Activated CD4-positive, alpha-beta T cell treated with anti-CD3 and anti-CD28 coated beads for 36 hours (primary cell): ENCODE measurements at regions of chr1 and their contacts with region 1.

Region 1: DNA sequence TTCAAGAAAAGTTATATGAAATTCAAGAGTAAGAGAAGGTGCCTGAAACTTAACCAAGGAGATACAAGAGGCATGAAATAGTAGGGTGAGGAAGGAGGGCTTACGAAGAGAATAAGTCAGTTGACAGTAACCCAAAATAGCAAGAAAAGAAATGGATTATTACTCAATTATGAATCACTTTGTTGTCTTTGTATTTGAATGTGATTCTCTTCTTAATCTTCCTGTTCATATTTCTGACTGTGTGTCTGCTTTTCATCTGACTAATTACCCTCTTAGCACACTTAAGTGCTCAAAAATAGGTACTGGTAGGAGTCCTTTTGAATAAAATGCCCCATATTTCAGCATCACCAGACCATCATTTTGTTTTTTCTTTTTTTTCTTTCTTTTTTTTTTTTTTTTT is 39.4 kb downstream of the GLMN start:
- DNase-seq: no peak
- ATAC-seq: no peak
- H3K4me3 Mint-ChIP-seq: no peak overlapping the region
- H3K27ac Mint-ChIP-seq: no peak overlapping the region
- H3K4me1 Mint-ChIP-seq: peaks cover 3% of the 10 kb centered on the region
- H3K27me3 Mint-ChIP-seq: no peaks in the 10 kb centered on the region

Region 2: DNA sequence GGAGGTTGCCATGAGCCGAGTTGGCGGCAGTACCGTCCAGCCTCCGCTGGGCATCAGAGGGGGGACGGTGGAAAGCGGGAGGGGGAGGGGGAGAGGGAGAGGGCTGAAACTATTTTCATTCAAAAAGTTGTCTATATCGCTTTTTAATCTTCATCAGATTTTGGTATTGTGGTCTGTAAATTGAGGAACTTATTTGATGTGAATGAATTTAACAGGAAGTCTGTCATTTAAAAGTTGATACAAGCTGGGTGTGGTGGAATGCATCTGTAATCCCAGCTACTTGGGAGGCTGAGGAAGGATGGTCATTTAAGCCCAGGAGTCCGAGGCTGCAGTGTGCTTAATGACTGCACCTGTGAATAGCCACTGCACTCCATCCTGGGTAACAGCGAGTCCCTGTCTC is 232.5 kb before region 1 on chr1:
- CTCF ChIA-PET with region 1: no interaction called
- POLR2A ChIA-PET with region 1: interaction called, 11 read pairs
- intact Hi-C with region 1: no loop called
- DNase-seq: no peak
- ATAC-seq: no peak
- H3K4me3 Mint-ChIP-seq: no peak overlapping the region
- H3K27ac Mint-ChIP-seq: no peak overlapping the region
- H3K4me1 Mint-ChIP-seq: peaks cover 21% of the 10 kb centered on the region
- H3K27me3 Mint-ChIP-seq: peaks cover 35% of the 10 kb centered on the region

Region 3: GRCh38 chr1:92291372-92291999 is 32.1 kb after region 1 on chr1:
- CTCF ChIA-PET with region 1: no interaction called
- POLR2A ChIA-PET with region 1: no interaction called
- intact Hi-C with region 1: loop called in 1 of 2 experiments (anchors 5 kb)
- DNase-seq: no peak
- ATAC-seq: no peak
- H3K4me3 Mint-ChIP-seq: no peak overlapping the region
- H3K27ac Mint-ChIP-seq: no peak overlapping the region
- H3K4me1 Mint-ChIP-seq: peaks cover 17% of the 10 kb centered on the region
- H3K27me3 Mint-ChIP-seq: no peaks in the 10 kb centered on the region